ENCODE measurements at regions of chr10 and their contacts with region 1.

Region 1: GRCh38 chr10:51770698-51771097 is 71.3 kb upstream of the CSTF2T start:
- DNase-seq: no peak
- ATAC-seq: no peak
- H3K4me3 ChIP-seq: no peak overlapping the region
- H3K4me3 Mint-ChIP-seq: no peak overlapping the region
- H3K27ac ChIP-seq: no peak overlapping the region
- H3K27ac Mint-ChIP-seq: no peak overlapping the region
- H3K4me1 ChIP-seq: no peaks in the 10 kb centered on the region
- H3K4me1 Mint-ChIP-seq: no peaks in the 10 kb centered on the region
- H3K27me3 ChIP-seq: no peaks in the 10 kb centered on the region
- H3K27me3 Mint-ChIP-seq: peaks cover 4% of the 10 kb centered on the region
- CTCF ChIP-seq: no peak

Region 2: DNA sequence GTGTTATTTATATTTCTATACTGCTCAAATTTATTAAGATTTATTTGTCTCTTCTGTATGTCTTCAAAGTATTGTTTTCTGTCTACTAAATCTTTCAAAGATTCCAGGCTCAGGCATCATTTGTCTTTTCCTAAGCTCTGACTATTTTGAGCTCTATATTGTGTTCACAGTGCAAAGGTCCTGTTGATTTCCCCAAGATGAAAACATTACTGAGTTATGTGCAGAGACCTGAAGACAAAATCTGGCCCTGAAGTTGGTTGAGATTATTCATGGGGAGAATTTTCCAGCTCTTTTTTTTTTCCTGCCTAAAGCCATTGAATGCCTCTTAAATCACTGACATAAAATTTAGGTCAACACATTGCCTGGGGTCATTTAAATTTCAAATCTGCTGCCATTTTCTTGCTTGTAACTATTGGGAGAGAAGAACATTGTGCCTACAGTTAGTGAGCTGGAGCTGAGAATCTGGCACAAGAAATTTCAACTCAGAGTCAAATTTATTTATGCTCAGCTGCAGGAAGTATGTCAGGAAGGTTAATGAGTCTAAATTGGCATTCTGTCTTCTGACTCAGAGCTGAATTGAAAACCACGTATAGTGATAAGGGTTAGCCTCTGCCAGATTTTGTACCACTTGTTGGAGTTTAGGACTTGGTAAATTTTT is 102.9 kb before region 1 on chr10:
- CTCF ChIA-PET with region 1: no interaction called
- POLR2A ChIA-PET with region 1: no interaction called
- intact Hi-C with region 1: loop called in 1 of 2 experiments (anchors 10 kb)
- DNase-seq: no peak
- ATAC-seq: no peak
- H3K4me3 ChIP-seq: no peak overlapping the region
- H3K4me3 Mint-ChIP-seq: no peak overlapping the region
- H3K27ac ChIP-seq: no peak overlapping the region
- H3K27ac Mint-ChIP-seq: no peak overlapping the region
- H3K4me1 ChIP-seq: no peaks in the 10 kb centered on the region
- H3K4me1 Mint-ChIP-seq: no peaks in the 10 kb centered on the region
- H3K27me3 ChIP-seq: no peaks in the 10 kb centered on the region
- H3K27me3 Mint-ChIP-seq: peaks cover 6% of the 10 kb centered on the region
- CTCF ChIP-seq: no peak

Region 3: GRCh38 chr10:52027055-52027705 is 256.5 kb after region 1 on chr10:
- CTCF ChIA-PET with region 1: no interaction called
- POLR2A ChIA-PET with region 1: no interaction called
- intact Hi-C with region 1: no loop called
- DNase-seq: no peak
- ATAC-seq: no peak
- H3K4me3 ChIP-seq: no peak overlapping the region
- H3K4me3 Mint-ChIP-seq: no peak overlapping the region
- H3K27ac ChIP-seq: no peak overlapping the region
- H3K27ac Mint-ChIP-seq: no peak overlapping the region
- H3K4me1 ChIP-seq: no peaks in the 10 kb centered on the region
- H3K4me1 Mint-ChIP-seq: no peaks in the 10 kb centered on the region
- H3K27me3 ChIP-seq: no peaks in the 10 kb centered on the region
- H3K27me3 Mint-ChIP-seq: no peaks in the 10 kb centered on the region
- CTCF ChIP-seq: no peak